MCF 10A (cell line): ENCODE measurements at regions of chr15 and their contacts with region 1.

Region 1: DNA sequence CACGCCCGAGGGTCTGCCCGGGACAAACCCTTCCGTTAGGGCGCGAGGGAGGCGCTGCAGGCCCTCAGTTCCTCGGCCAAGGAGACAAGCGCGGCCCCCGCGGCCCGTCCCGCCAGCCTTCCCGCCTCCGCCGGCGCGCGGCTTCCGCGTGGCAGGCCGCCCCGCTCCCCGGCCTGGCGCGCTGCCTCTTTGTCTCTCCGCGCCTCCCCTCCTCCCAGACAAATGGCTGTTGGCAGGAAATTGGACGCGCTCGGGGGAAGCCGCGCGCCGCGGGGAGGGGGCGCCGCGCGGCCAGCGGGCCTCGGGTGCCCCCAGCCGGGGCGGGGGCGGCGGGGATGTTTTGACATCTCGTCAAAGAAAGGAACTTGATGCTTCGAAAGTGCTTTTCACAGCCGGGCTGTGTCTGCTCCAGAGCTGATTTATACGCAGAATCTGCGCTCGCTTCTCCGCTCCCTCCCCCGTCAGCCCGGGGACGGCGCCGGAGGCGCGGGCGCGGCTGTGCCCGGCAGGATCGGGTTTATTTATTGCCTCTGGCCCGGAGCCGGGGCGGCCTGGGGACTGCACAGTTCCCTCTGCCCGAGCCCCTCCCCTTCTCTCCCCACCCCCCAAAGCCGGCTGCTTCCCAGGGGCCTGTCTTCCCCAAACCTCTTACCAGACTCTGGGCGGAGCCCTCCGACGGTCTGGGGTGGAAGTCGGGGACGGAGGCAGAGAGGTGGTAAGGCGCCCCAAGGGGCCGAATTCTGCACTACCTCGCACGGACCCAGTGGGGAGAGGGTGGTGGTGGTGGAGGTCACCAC is 20.7 kb downstream of the SHF start:
- DNase-seq: peak; percentile 88
- H3K4me3 Mint-ChIP-seq: peak overlapping the region; percentile 71
- H3K27ac Mint-ChIP-seq: peak overlapping the region; percentile 63
- H3K4me1 Mint-ChIP-seq: peaks cover 19% of the 10 kb centered on the region
- H3K27me3 Mint-ChIP-seq: no peaks in the 10 kb centered on the region
- CTCF ChIP-seq: peak; percentile 70

Region 2: GRCh38 chr15:45126535-45127158 is 40.4 kb before region 1 on chr15:
- CTCF ChIA-PET with region 1: interaction called, 93 read pairs
- POLR2A ChIA-PET with region 1: interaction called, 8 read pairs
- intact Hi-C with region 1: loop called (anchors 1 kb)
- DNase-seq: peak; percentile 63
- H3K4me3 Mint-ChIP-seq: no peak overlapping the region
- H3K27ac Mint-ChIP-seq: no peak overlapping the region
- H3K4me1 Mint-ChIP-seq: peaks cover 11% of the 10 kb centered on the region
- H3K27me3 Mint-ChIP-seq: peaks cover 21% of the 10 kb centered on the region
- CTCF ChIP-seq: peak; percentile 70

Region 3: DNA sequence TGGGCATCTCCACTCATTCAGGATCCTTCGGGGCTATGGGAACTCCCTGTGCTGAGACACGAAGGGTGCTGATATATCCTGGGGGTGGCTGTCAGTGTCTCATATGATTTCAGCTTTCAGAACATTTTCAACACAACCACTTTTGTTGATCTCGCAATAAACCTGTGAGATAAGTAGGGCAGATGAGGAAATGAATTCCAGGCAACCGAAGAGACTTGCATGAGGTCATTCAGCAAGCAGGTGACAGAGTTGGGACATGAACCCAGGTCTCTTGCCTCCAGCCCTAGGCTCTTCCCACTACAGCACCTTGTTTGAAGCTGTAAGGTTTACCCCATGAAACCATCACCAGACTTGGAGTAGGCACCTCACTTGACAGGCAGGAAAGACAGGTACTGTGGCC is 20.6 kb before region 1 on chr15:
- CTCF ChIA-PET with region 1: interaction called, 17 read pairs
- POLR2A ChIA-PET with region 1: interaction called, 4 read pairs
- intact Hi-C with region 1: no loop called
- DNase-seq: no peak
- H3K4me3 Mint-ChIP-seq: no peak overlapping the region
- H3K27ac Mint-ChIP-seq: no peak overlapping the region
- H3K4me1 Mint-ChIP-seq: peaks cover 19% of the 10 kb centered on the region
- H3K27me3 Mint-ChIP-seq: no peaks in the 10 kb centered on the region
- CTCF ChIP-seq: no peak

Region 4: DNA sequence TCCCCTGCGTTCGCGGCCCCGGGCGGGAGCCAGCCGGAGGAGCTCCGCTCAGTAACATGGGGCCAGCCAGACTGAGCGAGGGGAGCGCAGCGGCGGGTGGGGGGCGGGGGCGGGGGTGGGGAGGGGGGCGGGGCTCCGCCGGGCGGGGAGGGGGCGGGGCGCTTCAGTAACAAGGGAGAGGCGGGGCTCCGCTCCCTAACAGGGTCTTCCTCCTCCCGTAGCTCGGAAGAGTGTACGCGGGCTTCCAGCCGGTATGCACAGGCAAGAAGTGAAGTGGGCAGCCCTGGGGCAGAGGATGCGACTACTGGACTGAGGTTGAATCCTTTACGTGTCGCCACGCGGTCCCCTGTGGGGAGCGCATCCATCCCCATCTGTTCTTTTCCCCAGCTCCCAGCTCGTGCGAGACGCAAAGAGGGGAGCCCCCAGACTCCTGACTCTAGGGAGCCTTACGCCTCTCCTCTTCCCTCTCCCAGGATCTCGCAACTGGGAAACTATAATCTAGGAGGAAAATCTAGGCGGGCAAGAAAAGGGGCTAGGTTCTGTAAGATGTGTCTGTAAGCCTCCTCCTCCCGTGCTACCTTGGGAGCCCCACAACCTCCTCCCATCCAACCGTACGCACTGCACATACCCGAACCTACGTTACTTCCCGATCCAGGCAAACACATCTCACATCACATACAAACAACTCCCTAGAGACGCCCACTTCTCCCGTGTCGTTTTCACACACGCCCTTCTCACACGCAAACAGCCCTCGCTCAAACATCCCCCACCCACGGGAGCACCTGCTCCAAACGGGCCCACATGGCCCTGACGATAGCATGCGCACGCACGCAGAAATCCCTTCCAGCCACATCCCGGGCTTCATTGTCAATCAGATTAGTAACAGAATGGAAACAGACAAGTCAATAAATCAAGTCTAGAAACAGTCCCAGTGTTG is 21.1 kb after region 1 on chr15 and contains the start of gene SHF:
- CTCF ChIA-PET with region 1: interaction called, 36 read pairs
- POLR2A ChIA-PET with region 1: no interaction called
- intact Hi-C with region 1: no loop called
- DNase-seq: no peak
- H3K4me3 Mint-ChIP-seq: peak within 1 kb of the TSS; percentile 76
- H3K27ac Mint-ChIP-seq: peak within 1 kb of the TSS; percentile 54
- H3K4me1 Mint-ChIP-seq: peaks cover 19% of the 10 kb centered on the region
- H3K27me3 Mint-ChIP-seq: no peaks in the 10 kb centered on the region
- CTCF ChIP-seq: no peak
- total RNA-seq, gene SHF: 0.34 and 0.44 TPM in 2 replicates

Region 5: GRCh38 chr15:45205192-45205591 is 38.2 kb after region 1 on chr15:
- CTCF ChIA-PET with region 1: interaction called, 94 read pairs
- POLR2A ChIA-PET with region 1: interaction called, 113 read pairs
- intact Hi-C with region 1: loop called (anchors 1 kb)
- DNase-seq: peak; percentile 80
- H3K4me3 Mint-ChIP-seq: no peak overlapping the region
- H3K27ac Mint-ChIP-seq: no peak overlapping the region
- H3K4me1 Mint-ChIP-seq: peaks cover 6% of the 10 kb centered on the region
- H3K27me3 Mint-ChIP-seq: no peaks in the 10 kb centered on the region
- CTCF ChIP-seq: peak; percentile 75

Region 6: GRCh38 chr15:45378149-45378912 is 211.3 kb after region 1 on chr15 and contains the start of gene GATM:
- CTCF ChIA-PET with region 1: interaction called, 10 read pairs
- POLR2A ChIA-PET with region 1: no interaction called
- intact Hi-C with region 1: no loop called
- DNase-seq: peak; percentile 78
- H3K4me3 Mint-ChIP-seq: peak within 1 kb of the TSS; percentile 84
- H3K27ac Mint-ChIP-seq: no peak within 1 kb of the TSS
- H3K4me1 Mint-ChIP-seq: peaks cover 9% of the 10 kb centered on the region
- H3K27me3 Mint-ChIP-seq: peaks cover 34% of the 10 kb centered on the region
- CTCF ChIP-seq: peak; percentile 39
- total RNA-seq, gene GATM: 0.54 and 1.6 TPM in 2 replicates